ENCODE measurements at regions of chr1 and their contacts with region 1.

Region 1: DNA sequence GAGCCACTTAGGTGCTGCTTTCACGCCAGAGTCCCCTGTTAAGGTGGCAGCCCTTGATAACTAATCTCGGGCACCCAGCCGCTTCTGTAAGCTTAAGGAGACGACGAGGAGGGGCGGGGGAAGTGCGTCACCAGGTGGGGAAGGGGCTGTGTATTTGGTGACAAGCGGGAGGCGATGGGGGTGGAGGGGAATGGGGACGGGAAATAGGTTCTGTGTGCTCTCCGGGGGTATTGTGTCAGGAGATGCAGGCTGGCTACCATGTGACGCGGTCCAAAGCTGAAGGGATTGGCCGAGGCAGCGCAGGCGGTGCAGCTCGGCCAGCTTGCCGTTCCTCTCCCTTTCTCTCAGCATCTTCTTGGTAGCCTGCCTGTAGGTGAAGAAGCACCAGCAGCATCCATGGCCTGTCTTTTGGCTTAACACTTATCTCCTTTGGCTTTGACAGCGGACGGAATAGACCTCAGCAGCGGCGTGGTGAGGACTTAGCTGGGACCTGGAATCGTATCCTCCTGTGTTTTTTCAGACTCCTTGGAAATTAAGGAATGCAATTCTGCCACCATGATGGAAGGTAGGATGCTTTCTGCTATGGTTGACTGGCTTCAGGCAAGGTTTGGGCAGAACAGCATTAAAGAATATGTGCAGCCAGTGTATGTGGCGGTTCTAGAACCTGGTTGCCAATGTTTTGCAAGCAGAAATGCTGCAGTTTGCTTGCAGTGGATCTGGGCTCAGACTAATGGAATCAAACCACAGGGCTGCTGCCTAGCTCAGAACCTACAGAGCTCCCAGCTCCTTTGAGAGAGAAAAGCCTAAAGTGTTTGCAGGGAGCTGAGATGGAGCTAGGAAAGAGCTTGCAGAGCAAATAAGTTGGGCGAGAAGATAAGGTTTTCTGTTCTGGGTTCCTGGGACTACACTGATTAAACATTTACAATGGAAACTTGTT is at the start of gene SGIP1:
- DNase-seq: peak; percentile 74 to 94 (median 88)

Region 2: DNA sequence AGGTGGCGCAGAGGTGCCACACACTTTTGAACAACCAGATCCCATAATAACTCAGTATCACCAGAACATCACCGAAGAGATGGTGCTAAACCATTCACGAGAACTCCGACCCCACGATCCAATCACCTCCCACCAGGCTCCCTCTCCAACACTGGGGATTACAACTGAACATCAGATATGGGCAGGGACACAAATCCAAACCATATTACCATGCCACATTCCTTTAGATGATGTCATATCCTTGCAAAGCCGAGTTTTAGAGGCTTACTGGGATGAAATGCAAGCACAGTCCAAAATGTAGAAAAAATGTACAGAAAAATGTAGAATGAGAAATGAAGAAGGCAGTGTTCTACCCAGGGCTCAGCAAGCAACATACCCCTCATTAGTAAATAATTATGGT is 64.6 kb after region 1 on chr1:
- intact Hi-C with region 1: loop called (anchors 10 kb)
- DNase-seq: no peak

Region 3: GRCh38 chr1:66725885-66726665 is 192.0 kb after region 1 on chr1:
- intact Hi-C with region 1: loop called (anchors 10 kb)
- DNase-seq: peak in 39 of 42 donors; percentile 4 to 88 (median 56)